Brain microvascular endothelial cell (primary cell): ENCODE measurements at regions of chr13 and their contacts with region 1.

Region 1: DNA sequence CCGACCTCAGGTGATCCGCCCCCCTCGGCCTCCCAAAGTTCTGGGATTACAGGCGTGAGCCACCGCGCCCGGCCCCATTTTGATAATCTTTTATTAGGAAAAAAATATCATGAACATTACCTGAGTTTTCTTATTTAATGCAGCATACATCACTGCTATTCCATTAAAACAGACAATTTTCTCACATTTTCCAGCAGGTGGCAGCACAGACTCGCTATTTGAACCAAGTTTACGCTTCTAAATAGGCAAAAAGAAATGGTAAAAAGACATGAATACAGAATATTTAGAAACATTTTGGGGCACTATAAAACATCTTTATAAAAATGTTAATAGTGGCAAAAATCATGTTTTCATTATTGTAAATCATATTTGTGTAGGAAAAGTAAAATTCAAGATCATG is 903.1 kb downstream of the SLITRK6 start:
- DNase-seq: peak; percentile 27
- H3K4me3 ChIP-seq: no peak overlapping the region
- H3K27ac ChIP-seq: no peak overlapping the region
- H3K27me3 ChIP-seq: no peaks in the 10 kb centered on the region
- CTCF ChIP-seq: peak; percentile 60

Region 2: DNA sequence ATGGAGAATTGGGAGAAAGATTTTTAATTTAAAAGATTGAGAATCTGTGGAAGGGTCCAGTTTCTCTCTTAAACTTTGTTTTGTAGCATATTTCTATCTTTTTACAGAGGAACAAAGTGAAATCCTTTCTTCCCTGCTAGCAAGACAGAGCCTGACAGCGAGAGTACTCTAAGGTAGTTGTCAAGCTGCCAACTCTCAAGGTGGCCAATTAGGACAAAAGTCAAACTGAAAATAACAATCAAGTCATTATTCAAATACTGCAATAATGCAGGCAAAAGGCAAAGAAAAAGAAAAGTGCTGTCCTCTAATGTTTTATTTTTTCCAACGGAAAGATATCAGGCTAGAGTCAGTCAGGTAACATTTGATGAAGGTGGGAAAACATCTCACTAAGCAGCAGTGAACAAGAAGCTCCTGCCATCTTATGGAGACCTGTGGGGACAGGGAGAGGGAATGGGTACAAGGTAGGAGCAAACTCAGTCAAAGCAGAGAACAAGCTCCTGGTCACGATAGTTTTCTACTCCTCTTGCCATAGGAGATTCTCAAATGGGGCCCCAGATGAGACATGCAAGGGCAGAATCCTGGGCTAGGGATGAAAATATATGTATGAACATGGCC is 212.0 kb before region 1 on chr13:
- in situ Hi-C with region 1: no loop called
- DNase-seq: no peak
- H3K4me3 ChIP-seq: no peak overlapping the region
- H3K27ac ChIP-seq: no peak overlapping the region
- H3K27me3 ChIP-seq: no peaks in the 10 kb centered on the region
- CTCF ChIP-seq: no peak

Region 3: DNA sequence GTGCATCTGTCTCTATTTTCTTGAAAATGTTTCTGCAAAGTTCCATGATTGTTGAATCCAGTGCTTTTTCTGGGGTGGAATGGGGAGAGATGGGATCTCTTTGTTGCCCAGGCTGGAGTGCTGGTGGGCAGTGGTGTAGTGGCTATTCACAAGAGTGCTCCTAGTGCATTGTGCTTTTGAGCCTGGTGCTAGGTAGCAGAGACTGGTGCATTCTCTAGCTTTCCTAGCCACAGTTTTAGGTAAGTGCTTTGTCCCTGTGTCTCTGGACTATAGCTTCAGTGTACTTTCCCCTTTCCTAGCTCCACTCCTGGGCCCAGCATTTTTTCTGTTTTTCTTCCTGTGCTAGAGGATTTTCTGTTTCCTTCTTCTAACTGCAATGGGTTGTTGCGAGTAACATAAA is 77.5 kb after region 1 on chr13:
- in situ Hi-C with region 1: no loop called
- DNase-seq: no peak
- H3K4me3 ChIP-seq: no peak overlapping the region
- H3K27ac ChIP-seq: no peak overlapping the region
- H3K27me3 ChIP-seq: no peaks in the 10 kb centered on the region
- CTCF ChIP-seq: no peak

Region 4: GRCh38 chr13:85132986-85133385 is 236.9 kb after region 1 on chr13:
- in situ Hi-C with region 1: no loop called
- DNase-seq: no peak
- H3K4me3 ChIP-seq: no peak overlapping the region
- H3K27ac ChIP-seq: no peak overlapping the region
- H3K27me3 ChIP-seq: no peaks in the 10 kb centered on the region
- CTCF ChIP-seq: no peak

Region 5: DNA sequence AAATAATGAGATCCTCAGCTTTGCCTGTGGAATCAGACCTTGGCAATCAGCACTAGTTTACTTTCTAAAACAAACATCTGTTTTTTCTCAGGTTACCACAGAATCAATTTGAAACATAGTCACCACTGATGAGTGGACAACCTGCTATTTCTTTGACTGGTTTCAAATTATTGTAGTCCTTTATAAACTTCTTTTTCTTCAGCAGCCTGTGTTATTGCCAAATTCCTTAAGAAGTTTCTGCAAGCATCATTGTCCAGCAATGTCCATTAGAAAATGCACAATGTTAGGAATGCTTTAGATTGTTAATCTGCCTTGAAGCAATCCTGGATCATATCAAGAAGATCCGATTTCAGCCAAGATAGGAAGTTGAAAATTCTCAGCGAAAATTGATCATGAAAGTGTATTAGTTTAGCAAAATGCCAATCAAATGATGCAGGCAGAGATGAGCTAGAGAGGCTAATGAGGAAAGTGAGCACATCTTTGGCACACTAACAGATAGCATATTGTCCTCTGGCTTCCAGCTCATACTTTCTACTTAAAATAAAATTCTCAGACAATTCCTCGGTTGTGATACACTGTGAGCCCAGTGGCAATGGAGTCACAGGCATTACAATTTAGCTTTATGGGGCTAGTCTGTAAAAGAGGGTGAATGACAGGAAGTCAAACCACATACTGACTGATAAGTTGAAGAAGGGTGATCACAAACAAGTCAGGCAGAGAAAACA is 632.5 kb after region 1 on chr13:
- in situ Hi-C with region 1: no loop called
- DNase-seq: peak; percentile 59
- H3K4me3 ChIP-seq: no peak overlapping the region
- H3K27ac ChIP-seq: peak overlapping the region; percentile 23
- H3K27me3 ChIP-seq: no peaks in the 10 kb centered on the region
- CTCF ChIP-seq: no peak

Region 6: GRCh38 chr13:85806553-85807175 is 910.5 kb after region 1 on chr13:
- in situ Hi-C with region 1: loop called (anchors 25 kb)
- DNase-seq: no peak
- H3K4me3 ChIP-seq: no peak overlapping the region
- H3K27ac ChIP-seq: no peak overlapping the region
- H3K27me3 ChIP-seq: no peaks in the 10 kb centered on the region
- CTCF ChIP-seq: peak; percentile 35